ENCODE measurements at regions of chr9 and their contacts with region 1.

Region 1: GRCh38 chr9:134171316-134172197 is 7.2 kb upstream of the RNU6ATAC start:
- DNase-seq: no peak
- ATAC-seq: no peak
- H3K4me3 ChIP-seq: no peak overlapping the region
- H3K27ac ChIP-seq: no peak overlapping the region
- H3K4me1 ChIP-seq: no peaks in the 10 kb centered on the region
- H3K27me3 ChIP-seq: no peaks in the 10 kb centered on the region
- CTCF ChIP-seq: no peak

Region 2: GRCh38 chr9:134443168-134444037 is 271.8 kb after region 1 on chr9:
- CTCF ChIA-PET with region 1: interaction called, 7 read pairs
- POLR2A ChIA-PET with region 1: no interaction called
- in situ Hi-C with region 1: no loop called
- intact Hi-C with region 1: loop called (anchors 2 kb)
- DNase-seq: peak; percentile 56
- ATAC-seq: peak; percentile 92
- H3K4me3 ChIP-seq: no peak overlapping the region
- H3K27ac ChIP-seq: no peak overlapping the region
- H3K4me1 ChIP-seq: peaks cover 9% of the 10 kb centered on the region
- H3K27me3 ChIP-seq: no peaks in the 10 kb centered on the region
- CTCF ChIP-seq: peak; percentile 93